ENCODE measurements at regions of chr7 and their contacts with region 1.

Region 1: GRCh38 chr7:116929914-116930913 is 23.1 kb upstream of the ST7 start:
- DNase-seq: peak; percentile 81 to 98
- H3K4me3 ChIP-seq: no peak overlapping the region
- CTCF ChIP-seq: peak in 1 of 3 donors; percentile 59
- POLR2A ChIP-seq: no peak

Region 2: DNA sequence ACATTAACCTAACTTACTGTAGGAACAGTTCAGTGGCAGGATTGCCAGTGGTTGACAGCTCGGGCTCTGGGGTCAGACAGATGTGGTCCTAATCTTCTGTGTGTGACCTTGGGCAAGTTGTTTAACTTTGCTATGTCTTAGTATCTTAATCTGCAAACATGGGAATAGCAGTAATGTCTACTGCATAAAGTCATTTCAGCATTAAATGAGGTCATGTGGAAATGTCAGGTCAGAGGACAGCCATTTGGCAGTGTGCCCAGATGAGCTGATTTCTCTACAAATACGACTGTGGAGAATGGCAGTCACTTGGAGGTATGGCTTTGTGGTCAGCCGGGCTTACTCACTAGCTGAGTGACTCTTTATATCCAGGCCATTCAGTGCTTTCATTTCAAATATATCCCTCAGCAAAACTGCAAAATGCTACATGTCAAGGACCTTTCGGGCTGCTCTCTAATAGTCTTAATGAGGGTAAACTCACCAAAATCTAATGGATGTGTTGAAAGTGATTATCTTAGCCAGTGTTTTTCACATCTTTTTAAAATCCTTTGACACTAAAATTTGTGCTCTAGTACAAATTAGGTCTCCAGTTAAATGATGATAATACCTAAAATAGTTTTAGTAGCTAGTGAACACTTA is 194.5 kb after region 1 on chr7:
- intact Hi-C with region 1: loop called (anchors 5 kb)
- DNase-seq: peak; percentile 76 to 93
- H3K4me3 ChIP-seq: no peak overlapping the region
- CTCF ChIP-seq: no peak
- POLR2A ChIP-seq: no peak

Region 3: DNA sequence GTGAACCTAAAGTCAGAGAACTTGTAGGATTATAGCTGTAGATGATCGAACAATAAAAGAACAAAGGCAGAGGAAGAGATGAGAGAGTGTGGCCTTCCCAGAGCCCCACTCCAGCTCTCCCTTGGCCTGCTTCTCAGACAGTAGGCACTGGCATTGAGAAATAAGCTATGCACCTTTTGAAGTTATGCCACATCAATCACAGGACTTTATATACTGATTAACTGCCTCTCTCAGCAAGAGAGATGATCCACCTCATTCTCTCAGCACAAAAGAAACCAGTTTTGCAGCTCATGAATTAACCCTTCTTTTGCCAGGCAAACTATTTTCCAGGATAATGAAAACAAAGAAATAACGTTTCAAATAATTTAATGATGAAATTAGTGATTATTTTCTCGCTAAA is 965.1 kb after region 1 on chr7:
- intact Hi-C with region 1: no loop called
- DNase-seq: no peak
- H3K4me3 ChIP-seq: no peak overlapping the region
- CTCF ChIP-seq: no peak
- POLR2A ChIP-seq: no peak